Ascending aorta (tissue), 2 donors: ENCODE measurements at regions of chr4 and their contacts with region 1.

Region 1: GRCh38 chr4:57410331-57411052 is 300.3 kb upstream of the IGFBP7 start:
- DNase-seq: peak in 1 of 2 donors; percentile 80
- H3K4me3 ChIP-seq: no peak overlapping the region
- H3K27ac ChIP-seq: peak overlapping the region; percentile 82 to 85
- H3K4me1 ChIP-seq: peaks cover 3 to 14% of the 10 kb centered on the region in 2 donors
- H3K27me3 ChIP-seq: no peaks in the 10 kb centered on the region
- CTCF ChIP-seq: no peak

Region 2: GRCh38 chr4:56977321-56978012 is 433.0 kb before region 1 on chr4 and contains the start of gene NOA1:
- intact Hi-C with region 1: loop called (anchors 2 kb)
- DNase-seq: peak; percentile 98 to 100
- H3K4me3 ChIP-seq: peak within 1 kb of the TSS; percentile 84 to 91
- H3K27ac ChIP-seq: peak within 1 kb of the TSS; percentile 90 to 94
- H3K4me1 ChIP-seq: peaks cover 5 to 19% of the 10 kb centered on the region in 2 donors
- H3K27me3 ChIP-seq: no peaks in the 10 kb centered on the region
- CTCF ChIP-seq: no peak
- total RNA-seq, gene NOA1: 36.6 TPM

Region 3: GRCh38 chr4:57043347-57044251 is 366.9 kb before region 1 on chr4:
- intact Hi-C with region 1: loop called (anchors 5 kb)
- DNase-seq: no peak
- H3K4me3 ChIP-seq: peak overlapping the region in 1 of 2 donors; percentile 38
- H3K27ac ChIP-seq: peak overlapping the region; percentile 85
- H3K4me1 ChIP-seq: peaks cover 5 to 71% of the 10 kb centered on the region in 2 donors
- H3K27me3 ChIP-seq: no peaks in the 10 kb centered on the region
- CTCF ChIP-seq: no peak

Region 4: GRCh38 chr4:57291911-57292310 is 118.6 kb before region 1 on chr4:
- intact Hi-C with region 1: loop called (anchors 5 kb)
- DNase-seq: no peak
- H3K4me3 ChIP-seq: no peak overlapping the region
- H3K27ac ChIP-seq: no peak overlapping the region
- H3K4me1 ChIP-seq: no peaks in the 10 kb centered on the region
- H3K27me3 ChIP-seq: no peaks in the 10 kb centered on the region
- CTCF ChIP-seq: no peak

Region 5: GRCh38 chr4:57426779-57427395 is 16.4 kb after region 1 on chr4:
- intact Hi-C with region 1: loop called (anchors 1 kb)
- DNase-seq: peak in 1 of 2 donors; percentile 74
- H3K4me3 ChIP-seq: no peak overlapping the region
- H3K27ac ChIP-seq: no peak overlapping the region
- H3K4me1 ChIP-seq: peaks cover 0 to 8% of the 10 kb centered on the region in 2 donors
- H3K27me3 ChIP-seq: no peaks in the 10 kb centered on the region
- CTCF ChIP-seq: peak; percentile 44 to 79 (median 62)